Activated CD4-positive, alpha-beta T cell treated with anti-CD3 and anti-CD28 coated beads for 36 hours (primary cell): ENCODE measurements at regions of chr16 and their contacts with region 1.

Region 1: GRCh38 chr16:527006-527753 is at the start of gene CAPN15:
- DNase-seq: peak; percentile 91
- ATAC-seq: peak; percentile 71
- H3K4me3 Mint-ChIP-seq: peak within 1 kb of the TSS; percentile 94
- H3K27ac Mint-ChIP-seq: peak within 1 kb of the TSS; percentile 96
- H3K4me1 Mint-ChIP-seq: peaks cover 35% of the 10 kb centered on the region
- H3K27me3 Mint-ChIP-seq: no peaks in the 10 kb centered on the region
- total RNA-seq, gene CAPN15: 64.7 to 69.7 TPM

Region 2: GRCh38 chr16:138049-138417 is 389.1 kb before region 1 on chr16:
- CTCF ChIA-PET with region 1: no interaction called
- POLR2A ChIA-PET with region 1: no interaction called
- intact Hi-C with region 1: loop called in 1 of 2 experiments (anchors 1 kb)
- DNase-seq: peak; percentile 43
- ATAC-seq: peak; percentile 8
- H3K4me3 Mint-ChIP-seq: peak overlapping the region; percentile 78
- H3K27ac Mint-ChIP-seq: peak overlapping the region; percentile 81
- H3K4me1 Mint-ChIP-seq: peaks cover 24% of the 10 kb centered on the region
- H3K27me3 Mint-ChIP-seq: no peaks in the 10 kb centered on the region

Region 3: GRCh38 chr16:352547-353403 is 174.4 kb before region 1 on chr16 and contains the start of gene AXIN1:
- CTCF ChIA-PET with region 1: no interaction called
- POLR2A ChIA-PET with region 1: no interaction called
- intact Hi-C with region 1: loop called in 1 of 2 experiments (anchors 1 kb)
- DNase-seq: peak; percentile 100
- ATAC-seq: peak; percentile 89
- H3K4me3 Mint-ChIP-seq: peak within 1 kb of the TSS; percentile 80
- H3K27ac Mint-ChIP-seq: peak within 1 kb of the TSS; percentile 79
- H3K4me1 Mint-ChIP-seq: peaks cover 45% of the 10 kb centered on the region
- H3K27me3 Mint-ChIP-seq: no peaks in the 10 kb centered on the region
- total RNA-seq, gene AXIN1: 20.0 to 23.8 TPM

Region 4: GRCh38 chr16:401468-402348 is 125.5 kb before region 1 on chr16 and contains the start of gene DECR2:
- CTCF ChIA-PET with region 1: no interaction called
- POLR2A ChIA-PET with region 1: no interaction called
- intact Hi-C with region 1: loop called in 1 of 2 experiments (anchors 1 kb)
- DNase-seq: peak; percentile 100
- ATAC-seq: peak; percentile 87
- H3K4me3 Mint-ChIP-seq: peak within 1 kb of the TSS; percentile 82
- H3K27ac Mint-ChIP-seq: peak within 1 kb of the TSS; percentile 87
- H3K4me1 Mint-ChIP-seq: peaks cover 10% of the 10 kb centered on the region
- H3K27me3 Mint-ChIP-seq: no peaks in the 10 kb centered on the region
- total RNA-seq, gene DECR2: 11.5 to 13.0 TPM

Region 5: GRCh38 chr16:430904-431303 is 96.3 kb before region 1 on chr16:
- CTCF ChIA-PET with region 1: no interaction called
- POLR2A ChIA-PET with region 1: no interaction called
- intact Hi-C with region 1: no loop called
- DNase-seq: no peak
- ATAC-seq: no peak
- H3K4me3 Mint-ChIP-seq: no peak overlapping the region
- H3K27ac Mint-ChIP-seq: no peak overlapping the region
- H3K4me1 Mint-ChIP-seq: peaks cover 22% of the 10 kb centered on the region
- H3K27me3 Mint-ChIP-seq: no peaks in the 10 kb centered on the region

Region 6: GRCh38 chr16:610513-611334 is 83.5 kb after region 1 on chr16:
- CTCF ChIA-PET with region 1: interaction called, 4 read pairs
- POLR2A ChIA-PET with region 1: no interaction called
- intact Hi-C with region 1: loop called in 1 of 2 experiments (anchors 1 kb)
- DNase-seq: peak; percentile 82
- ATAC-seq: peak; percentile 57
- H3K4me3 Mint-ChIP-seq: no peak overlapping the region
- H3K27ac Mint-ChIP-seq: peak overlapping the region; percentile 32
- H3K4me1 Mint-ChIP-seq: peaks cover 17% of the 10 kb centered on the region
- H3K27me3 Mint-ChIP-seq: no peaks in the 10 kb centered on the region

Region 7: DNA sequence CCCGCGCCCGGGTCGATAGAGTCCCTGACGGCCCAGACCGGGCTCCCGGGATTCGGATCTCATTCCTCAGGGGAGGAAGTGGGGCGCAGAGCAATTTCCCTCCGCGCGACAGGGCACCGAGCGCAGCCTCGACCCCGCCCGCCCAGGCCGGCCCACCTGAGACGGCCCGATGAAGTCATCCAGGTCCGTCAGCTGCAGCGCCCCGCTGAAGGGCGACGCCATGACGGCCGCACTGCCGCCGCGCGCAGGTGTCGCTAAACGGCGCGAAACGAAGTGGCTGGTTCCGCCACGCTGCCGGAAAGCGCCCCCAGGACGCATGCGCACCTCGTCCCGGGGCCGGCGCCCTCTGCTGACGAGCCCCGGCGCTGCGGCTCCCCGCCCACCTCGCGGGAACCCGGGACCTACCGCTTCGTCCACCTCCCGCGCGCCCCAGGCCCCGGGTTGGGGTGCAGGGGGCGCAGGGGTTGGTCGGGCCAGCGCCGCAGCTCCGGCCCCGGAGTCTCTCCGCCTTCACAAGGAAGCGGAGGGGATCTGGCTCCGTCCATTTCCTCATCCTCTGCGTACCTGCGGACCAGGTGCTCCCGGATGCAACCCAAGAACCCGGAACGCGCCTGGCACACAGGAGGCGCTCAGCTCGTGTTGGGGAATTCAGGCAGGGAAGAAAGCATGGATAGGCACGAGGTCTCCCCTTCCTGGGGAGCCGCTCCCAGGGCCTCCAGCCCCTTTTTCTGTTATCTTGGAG is 213.8 kb after region 1 on chr16 and contains the start of gene CIAO3:
- CTCF ChIA-PET with region 1: no interaction called
- POLR2A ChIA-PET with region 1: no interaction called
- intact Hi-C with region 1: loop called in 1 of 2 experiments (anchors 1 kb)
- DNase-seq: peak; percentile 96
- ATAC-seq: peak; percentile 72
- H3K4me3 Mint-ChIP-seq: peak within 1 kb of the TSS; percentile 76
- H3K27ac Mint-ChIP-seq: peak within 1 kb of the TSS; percentile 51
- H3K4me1 Mint-ChIP-seq: peaks cover 22% of the 10 kb centered on the region
- H3K27me3 Mint-ChIP-seq: no peaks in the 10 kb centered on the region
- total RNA-seq, gene CIAO3: 28.3 to 31.9 TPM

Region 8: DNA sequence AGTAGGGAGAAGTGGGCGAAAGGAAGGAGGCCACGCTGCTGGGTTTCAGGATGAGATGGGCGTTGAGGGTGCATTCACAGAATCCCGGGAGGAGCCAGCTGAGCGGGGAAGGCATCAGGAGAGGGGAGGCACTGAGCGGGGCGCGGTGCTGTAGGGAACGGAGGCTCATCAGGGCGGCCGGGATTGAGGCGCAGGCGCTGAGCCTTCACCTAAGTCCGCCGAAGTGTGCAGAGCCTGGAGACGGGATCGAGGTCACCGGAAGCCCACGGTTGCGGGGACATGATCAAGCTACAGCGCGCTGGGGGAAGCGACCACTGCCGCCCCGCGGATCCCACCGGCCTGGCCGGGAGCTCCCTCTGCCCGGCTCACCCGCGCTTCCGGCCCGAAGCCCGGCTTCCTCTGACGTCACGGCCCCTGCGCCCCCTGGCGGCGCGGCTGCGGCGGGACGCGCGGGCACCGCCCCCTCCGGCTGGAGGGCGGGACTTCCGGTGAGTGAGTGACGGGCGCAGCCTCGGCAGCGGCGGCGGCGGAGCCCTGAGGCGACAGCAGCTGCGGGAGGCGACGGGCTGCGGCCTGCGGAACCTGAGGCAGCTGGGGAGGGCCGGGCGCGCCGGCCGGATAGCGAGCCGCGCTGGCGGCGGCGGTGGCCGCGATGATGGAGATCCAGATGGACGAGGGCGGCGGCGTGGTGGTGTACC is 1178.7 kb after region 1 on chr16 and contains the start of gene MAPK8IP3:
- CTCF ChIA-PET with region 1: no interaction called
- POLR2A ChIA-PET with region 1: no interaction called
- intact Hi-C with region 1: loop called in 1 of 2 experiments (anchors 5 kb)
- DNase-seq: peak; percentile 96
- ATAC-seq: peak; percentile 80
- H3K4me3 Mint-ChIP-seq: peak within 1 kb of the TSS; percentile 92
- H3K27ac Mint-ChIP-seq: peak within 1 kb of the TSS; percentile 90
- H3K4me1 Mint-ChIP-seq: peaks cover 32% of the 10 kb centered on the region
- H3K27me3 Mint-ChIP-seq: no peaks in the 10 kb centered on the region
- total RNA-seq, gene MAPK8IP3: 56.7 to 57.6 TPM